Breast epithelium (tissue), 4 donors: ENCODE measurements at regions of chr14 and their contacts with region 1.

Region 1: GRCh38 chr14:21014761-21015190 is 10.1 kb downstream of the NDRG2 start:
- DNase-seq: peak; percentile 84 to 85
- H3K4me3 ChIP-seq: no peak overlapping the region
- H3K27ac ChIP-seq: peak overlapping the region in 1 of 2 donors; percentile 52
- H3K4me1 ChIP-seq: no peaks in the 10 kb centered on the region
- H3K27me3 ChIP-seq: no peaks in the 10 kb centered on the region
- CTCF ChIP-seq: peak; percentile 93 to 95 (median 94)
- POLR2A ChIP-seq: no peak

Region 2: DNA sequence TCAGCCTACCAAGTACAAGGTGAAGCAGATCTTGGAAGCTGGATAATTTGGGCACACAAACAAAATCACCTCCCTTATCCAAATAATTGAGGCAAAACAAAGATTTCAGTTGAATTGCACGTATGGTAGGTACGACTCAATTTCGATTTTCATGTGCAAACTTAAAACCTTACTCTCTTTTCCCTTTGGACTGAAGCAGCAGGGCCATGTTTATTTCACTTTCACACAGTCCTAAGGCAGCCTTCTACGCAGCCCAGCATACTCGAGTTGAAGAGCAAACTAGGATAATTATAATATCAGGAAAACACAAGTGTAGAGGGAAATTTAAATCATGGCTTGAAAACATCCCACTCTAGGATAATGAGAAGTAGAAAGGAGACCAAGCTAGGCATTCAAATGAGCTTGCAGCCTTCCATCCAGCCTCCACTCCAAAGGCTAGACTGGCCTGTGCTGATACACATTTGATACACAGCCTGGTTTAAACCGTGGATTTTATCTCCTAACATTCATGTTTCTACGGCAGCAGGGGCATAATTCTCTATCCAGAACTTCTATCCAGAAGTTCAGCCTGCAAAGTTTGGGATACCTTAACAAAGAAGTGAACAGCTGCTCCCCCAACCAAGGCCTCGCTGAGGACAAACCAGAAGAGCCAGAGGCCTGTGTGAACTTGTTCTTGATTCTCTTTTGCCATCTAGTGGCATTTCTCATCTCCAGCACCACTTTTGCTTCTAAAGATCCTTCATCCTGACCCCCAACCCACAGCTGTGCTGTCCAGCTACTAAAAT is 25.0 kb after region 1 on chr14:
- intact Hi-C with region 1: loop called (anchors 2 kb)
- DNase-seq: peak in 1 of 2 donors; percentile 50
- H3K4me3 ChIP-seq: no peak overlapping the region
- H3K27ac ChIP-seq: peak overlapping the region; percentile 70 to 80
- H3K4me1 ChIP-seq: peaks cover 0 to 32% of the 10 kb centered on the region in 2 donors
- H3K27me3 ChIP-seq: no peaks in the 10 kb centered on the region
- CTCF ChIP-seq: peak; percentile 48 to 78 (median 75)
- POLR2A ChIP-seq: no peak

Region 3: GRCh38 chr14:21092273-21093011 is 77.7 kb after region 1 on chr14:
- intact Hi-C with region 1: loop called (anchors 5 kb)
- DNase-seq: peak; percentile 71 to 84
- H3K4me3 ChIP-seq: no peak overlapping the region
- H3K27ac ChIP-seq: peak overlapping the region; percentile 48 to 52
- H3K4me1 ChIP-seq: no peaks in the 10 kb centered on the region
- H3K27me3 ChIP-seq: no peaks in the 10 kb centered on the region
- CTCF ChIP-seq: peak; percentile 99 to 100 (median 100)
- POLR2A ChIP-seq: no peak